ENCODE measurements at regions of chr9 and their contacts with region 1.

Region 1: DNA sequence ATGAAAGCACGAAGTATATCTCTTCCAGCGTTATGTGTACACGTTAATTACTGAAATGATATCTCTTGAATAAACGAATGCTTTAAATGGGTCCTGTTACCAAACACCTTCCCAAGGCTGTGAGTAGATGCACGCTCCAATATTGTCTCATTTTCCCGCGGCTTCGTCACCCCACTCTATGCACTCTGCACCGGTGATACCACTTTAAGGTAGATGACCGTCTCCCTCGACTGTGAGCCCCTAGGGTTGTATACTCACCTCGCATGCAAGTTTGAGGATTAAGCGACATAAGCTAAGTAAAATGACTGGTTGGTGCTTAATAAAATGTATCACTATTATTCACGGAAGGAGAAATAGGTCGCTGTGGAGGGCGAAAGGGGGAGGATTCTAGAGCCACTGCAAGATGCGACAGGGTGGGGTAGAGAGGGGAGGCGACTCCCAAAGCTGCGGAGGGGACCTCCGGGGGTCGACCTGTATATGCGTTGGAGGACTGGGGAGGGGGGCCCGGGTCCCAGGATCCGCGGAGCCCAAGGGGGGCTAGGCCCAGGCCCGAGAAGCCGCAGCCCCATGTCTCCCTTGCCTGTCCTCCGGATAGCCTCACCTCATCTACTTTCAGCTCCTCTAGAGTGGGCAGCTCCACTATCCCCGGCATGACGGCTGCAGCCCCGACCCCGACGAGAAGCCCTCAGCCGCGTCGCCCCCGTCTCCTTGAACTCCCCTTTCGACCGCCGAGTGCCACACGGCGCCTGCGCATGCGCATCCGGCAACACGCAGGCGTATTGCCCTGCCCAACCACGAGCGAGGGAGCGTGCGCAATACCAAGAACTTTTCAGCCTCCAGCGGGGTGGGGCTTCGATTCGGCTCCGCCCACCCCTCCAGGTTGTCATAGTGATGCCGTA is at the starts of genes MORN5 and NDUFA8:
- H3K4me3 ChIP-seq: peak within 1 kb of the TSS; percentile 97
- H3K27ac ChIP-seq: peak within 1 kb of the TSS; percentile 63; the same call in 1 of the 2 replicates
- H3K4me1 ChIP-seq: no peaks in the 10 kb centered on the region
- CTCF ChIP-seq: no peak

Region 2: GRCh38 chr9:122131401-122132001 is 27.8 kb before region 1 on chr9:
- CTCF ChIA-PET with region 1: interaction called, 12 read pairs
- POLR2A ChIA-PET with region 1: no interaction called
- H3K4me3 ChIP-seq: no peak overlapping the region
- H3K27ac ChIP-seq: no peak overlapping the region
- H3K4me1 ChIP-seq: 0 out of 2 replicates have a peak, but pooled peaks cover 3% of the 10 kb centered on the region
- CTCF ChIP-seq: no peak

Region 3: GRCh38 chr9:122144836-122145591 is 14.3 kb before region 1 on chr9:
- CTCF ChIA-PET with region 1: interaction called, 31 read pairs
- POLR2A ChIA-PET with region 1: no interaction called
- H3K4me3 ChIP-seq: no peak overlapping the region
- H3K27ac ChIP-seq: no peak overlapping the region
- H3K4me1 ChIP-seq: no peaks in the 10 kb centered on the region
- CTCF ChIP-seq: no peak

Region 4: GRCh38 chr9:122180651-122181050 is 21.4 kb after region 1 on chr9:
- CTCF ChIA-PET with region 1: interaction called, 6 read pairs
- POLR2A ChIA-PET with region 1: interaction called, 10 read pairs
- H3K4me3 ChIP-seq: no peak overlapping the region
- H3K27ac ChIP-seq: no peak overlapping the region
- H3K4me1 ChIP-seq: no peaks in the 10 kb centered on the region
- CTCF ChIP-seq: no peak